ENCODE measurements at regions of chr12 and their contacts with region 1.

Region 1: GRCh38 chr12:120234643-120235368 is 30.7 kb downstream of the PXN start:
- DNase-seq: peak; percentile 95
- H3K4me3 ChIP-seq: no peak overlapping the region
- H3K27me3 ChIP-seq: no peaks in the 10 kb centered on the region
- CTCF ChIP-seq: peak; percentile 61

Region 2: DNA sequence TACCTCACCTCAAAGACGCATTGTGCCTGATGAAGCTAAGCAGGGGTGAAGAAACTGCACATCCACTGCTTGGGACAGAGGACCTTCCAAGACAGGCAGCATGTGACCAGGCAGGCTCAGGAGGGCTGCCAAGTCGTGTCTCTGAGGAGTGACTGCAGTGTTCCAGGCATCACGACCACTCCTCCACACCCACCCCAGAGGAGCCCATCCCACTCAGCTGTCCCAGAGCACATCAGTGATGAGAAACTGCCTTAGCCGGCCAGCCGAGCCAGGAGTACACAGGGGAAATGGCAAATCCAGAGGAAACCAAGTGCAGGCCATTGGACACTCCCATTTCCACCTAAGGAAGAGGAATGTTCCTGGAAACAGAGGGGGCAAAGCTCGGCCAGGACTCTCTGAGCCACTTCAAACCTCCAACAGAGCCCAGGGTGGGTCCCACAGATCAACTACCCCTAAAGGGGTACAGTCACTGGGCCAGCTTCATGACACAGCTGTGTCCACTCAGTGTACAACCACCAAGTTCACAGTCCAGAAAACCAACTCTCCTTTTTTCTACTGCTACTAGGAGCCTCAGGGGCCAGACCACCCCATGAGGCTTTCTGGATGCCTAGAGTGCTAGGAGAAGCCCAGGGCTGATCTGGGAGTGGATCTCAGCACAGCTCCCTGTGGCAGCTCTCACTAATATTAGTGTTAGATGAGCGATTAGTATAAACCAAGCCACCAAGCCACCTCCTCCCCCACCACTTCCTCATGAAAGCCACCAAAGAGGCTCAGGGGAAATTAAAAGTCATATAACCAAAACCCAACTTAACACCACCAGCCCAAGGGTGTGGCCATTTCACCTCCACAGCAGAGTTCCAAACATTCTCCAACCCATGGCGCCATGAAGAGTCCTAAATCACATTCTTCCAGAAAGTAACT is 15.3 kb after region 1 on chr12:
- CTCF ChIA-PET with region 1: interaction called, 75 read pairs
- POLR2A ChIA-PET with region 1: interaction called, 3 read pairs
- DNase-seq: no peak
- H3K4me3 ChIP-seq: no peak overlapping the region
- H3K27me3 ChIP-seq: no peaks in the 10 kb centered on the region
- CTCF ChIP-seq: no peak

Region 3: DNA sequence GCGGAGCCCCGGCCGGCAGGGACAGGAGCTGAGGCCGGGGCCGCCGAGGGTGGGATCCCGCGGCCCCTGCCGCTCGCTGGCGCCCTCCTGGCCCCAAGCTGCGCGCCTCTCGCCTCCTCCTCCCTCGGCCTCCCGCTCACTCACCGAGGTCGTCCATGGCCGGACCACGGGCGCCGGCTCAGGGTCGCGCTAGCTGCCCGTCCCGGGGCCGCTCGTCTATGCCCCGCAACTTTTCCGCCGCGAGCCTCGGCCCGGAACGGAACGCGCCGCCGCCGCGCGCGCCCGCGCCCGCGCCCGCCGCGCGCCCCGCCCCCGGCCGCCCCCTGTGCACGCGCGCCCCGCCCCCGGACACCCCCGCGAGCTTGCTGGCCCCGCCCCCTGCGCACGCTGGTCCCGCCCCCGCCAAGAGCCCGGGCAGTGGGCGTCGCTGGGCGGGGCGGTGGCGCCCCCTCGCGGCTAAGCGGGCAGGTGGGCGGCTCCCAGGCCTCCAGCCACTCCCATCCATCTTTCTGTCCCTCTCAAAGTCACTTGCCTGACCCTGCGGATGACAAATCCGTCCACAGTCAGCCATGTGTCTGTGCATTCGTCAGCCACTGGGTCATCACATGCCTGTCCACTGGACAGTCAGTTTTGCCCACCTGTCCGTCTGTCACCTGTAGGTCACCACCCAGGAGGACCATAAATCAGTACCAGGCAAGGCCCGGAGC is 30.8 kb after region 1 on chr12 and contains the start of gene PXN:
- CTCF ChIA-PET with region 1: interaction called, 482 read pairs
- POLR2A ChIA-PET with region 1: interaction called, 18 read pairs
- DNase-seq: no peak
- H3K4me3 ChIP-seq: peak within 1 kb of the TSS; percentile 95
- H3K27me3 ChIP-seq: no peaks in the 10 kb centered on the region
- CTCF ChIP-seq: peak; percentile 59
- polyA plus RNA-seq, gene PXN: 23.9 and 41.8 TPM in 2 replicates

Region 4: DNA sequence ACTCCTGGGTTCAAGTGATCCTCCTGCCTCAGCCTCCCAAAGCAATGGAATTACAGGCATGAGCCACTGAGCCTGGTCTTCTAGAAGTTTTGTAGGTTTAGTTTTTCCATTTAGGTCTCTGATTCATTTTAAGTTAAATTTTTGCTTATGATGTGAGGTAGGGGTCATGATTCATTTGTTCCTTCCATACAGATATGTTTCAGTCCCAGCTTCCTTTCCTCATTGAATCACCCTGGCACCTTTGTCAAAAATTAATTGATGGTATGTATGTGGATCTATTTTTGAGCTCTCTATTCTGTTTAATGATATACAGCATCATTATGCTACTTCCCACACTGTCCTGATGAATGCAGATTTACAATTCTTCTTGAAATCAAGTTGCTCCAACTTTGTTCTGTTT is 380.1 kb after region 1 on chr12:
- CTCF ChIA-PET with region 1: no interaction called
- POLR2A ChIA-PET with region 1: no interaction called
- DNase-seq: no peak
- H3K4me3 ChIP-seq: no peak overlapping the region
- H3K27me3 ChIP-seq: peaks cover 13% of the 10 kb centered on the region
- CTCF ChIP-seq: no peak

Measured in BJ (cell line).